ENCODE measurements at regions of chr5 and their contacts with region 1.

Region 1: DNA sequence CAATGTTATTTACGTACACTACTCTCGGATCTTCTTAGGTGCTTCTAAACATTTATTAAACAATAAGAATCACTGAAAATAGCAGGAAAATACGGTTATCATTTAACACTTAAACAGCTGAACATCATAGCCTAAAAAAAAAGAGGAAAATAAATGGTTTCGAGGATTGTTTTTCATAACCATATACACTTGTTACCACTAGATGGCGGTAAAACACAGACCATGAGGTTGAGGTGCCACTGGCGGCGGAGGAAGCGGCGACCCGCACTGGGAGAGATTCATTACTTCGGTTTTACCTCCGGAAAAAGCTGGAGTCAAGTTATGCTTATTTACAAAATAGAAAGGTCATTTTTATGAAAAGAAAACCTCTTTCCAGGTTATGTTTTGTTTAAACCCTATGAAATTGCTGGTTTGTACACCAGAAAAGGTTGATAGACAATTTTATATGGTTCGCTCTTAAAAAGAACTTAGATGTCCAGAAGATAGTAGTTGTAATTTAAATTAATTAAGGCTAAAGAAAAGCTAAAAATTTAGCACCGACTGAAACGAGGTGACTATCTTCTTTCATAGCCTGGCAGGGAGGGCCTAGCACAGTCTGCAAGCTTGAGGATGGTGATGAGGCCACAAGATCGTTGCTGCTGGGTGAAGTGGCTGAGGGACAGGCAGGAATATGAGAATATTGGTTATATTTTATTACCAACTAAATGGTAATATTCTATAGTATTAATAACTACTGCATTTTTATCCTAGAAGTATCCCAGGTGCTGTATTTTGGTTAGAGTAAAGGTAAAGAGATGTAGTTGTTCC is 605.7 kb downstream of the RAB3C start:
- DNase-seq: peak; percentile 78
- ATAC-seq: peak; percentile 75
- H3K4me3 Mint-ChIP-seq: no peak overlapping the region
- H3K27ac Mint-ChIP-seq: no peak overlapping the region
- H3K4me1 Mint-ChIP-seq: peaks cover 5% of the 10 kb centered on the region
- H3K27me3 Mint-ChIP-seq: peaks cover 14% of the 10 kb centered on the region

Region 2: DNA sequence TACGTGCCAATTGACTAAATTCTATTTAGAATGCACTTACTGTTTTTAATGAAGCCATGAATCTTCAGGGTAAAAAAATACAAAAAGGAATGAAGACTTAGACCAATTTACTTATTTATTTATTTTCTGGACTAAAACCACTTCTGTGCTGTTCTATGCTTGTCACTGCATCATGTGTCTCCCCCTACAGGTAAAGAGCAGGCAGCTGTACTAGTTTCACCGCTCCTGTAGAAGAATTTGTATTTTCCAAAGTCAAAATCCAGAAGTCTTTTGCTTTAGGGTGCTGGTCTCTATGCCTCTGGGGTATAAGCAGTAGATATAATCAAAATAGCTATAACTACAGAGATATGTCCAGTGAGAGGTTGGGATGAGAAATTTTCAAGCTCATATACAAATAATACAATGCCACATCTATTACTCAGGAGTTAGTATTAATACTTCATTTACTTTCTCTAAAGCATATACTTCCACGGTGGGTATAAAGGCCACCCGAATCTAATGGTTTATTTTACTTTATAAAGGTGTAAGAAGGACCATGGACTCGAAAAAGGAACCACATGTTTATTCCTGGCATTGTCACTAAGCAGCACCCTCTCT is 14.3 kb before region 1 on chr5:
- CTCF ChIA-PET with region 1: interaction called, 47 read pairs
- POLR2A ChIA-PET with region 1: no interaction called
- intact Hi-C with region 1: no loop called
- DNase-seq: peak; percentile 47
- ATAC-seq: peak; percentile 72
- H3K4me3 Mint-ChIP-seq: no peak overlapping the region
- H3K27ac Mint-ChIP-seq: no peak overlapping the region
- H3K4me1 Mint-ChIP-seq: peaks cover 16% of the 10 kb centered on the region
- H3K27me3 Mint-ChIP-seq: no peaks in the 10 kb centered on the region

Region 3: GRCh38 chr5:59218424-59219045 is 29.9 kb after region 1 on chr5:
- CTCF ChIA-PET with region 1: interaction called, 23 read pairs
- POLR2A ChIA-PET with region 1: no interaction called
- intact Hi-C with region 1: no loop called
- DNase-seq: no peak
- ATAC-seq: no peak
- H3K4me3 Mint-ChIP-seq: no peak overlapping the region
- H3K27ac Mint-ChIP-seq: no peak overlapping the region
- H3K4me1 Mint-ChIP-seq: peaks cover 2% of the 10 kb centered on the region
- H3K27me3 Mint-ChIP-seq: peaks cover 20% of the 10 kb centered on the region

Region 4: GRCh38 chr5:59335544-59335943 is 146.9 kb after region 1 on chr5:
- CTCF ChIA-PET with region 1: no interaction called
- POLR2A ChIA-PET with region 1: no interaction called
- intact Hi-C with region 1: no loop called
- DNase-seq: no peak
- ATAC-seq: no peak
- H3K4me3 Mint-ChIP-seq: no peak overlapping the region
- H3K27ac Mint-ChIP-seq: no peak overlapping the region
- H3K4me1 Mint-ChIP-seq: no peaks in the 10 kb centered on the region
- H3K27me3 Mint-ChIP-seq: peaks cover 17% of the 10 kb centered on the region

Region 5: GRCh38 chr5:59358005-59358861 is 169.6 kb after region 1 on chr5:
- CTCF ChIA-PET with region 1: interaction called, 17 read pairs
- POLR2A ChIA-PET with region 1: no interaction called
- intact Hi-C with region 1: no loop called
- DNase-seq: no peak
- ATAC-seq: no peak
- H3K4me3 Mint-ChIP-seq: no peak overlapping the region
- H3K27ac Mint-ChIP-seq: no peak overlapping the region
- H3K4me1 Mint-ChIP-seq: no peaks in the 10 kb centered on the region
- H3K27me3 Mint-ChIP-seq: peaks cover 16% of the 10 kb centered on the region

Region 6: DNA sequence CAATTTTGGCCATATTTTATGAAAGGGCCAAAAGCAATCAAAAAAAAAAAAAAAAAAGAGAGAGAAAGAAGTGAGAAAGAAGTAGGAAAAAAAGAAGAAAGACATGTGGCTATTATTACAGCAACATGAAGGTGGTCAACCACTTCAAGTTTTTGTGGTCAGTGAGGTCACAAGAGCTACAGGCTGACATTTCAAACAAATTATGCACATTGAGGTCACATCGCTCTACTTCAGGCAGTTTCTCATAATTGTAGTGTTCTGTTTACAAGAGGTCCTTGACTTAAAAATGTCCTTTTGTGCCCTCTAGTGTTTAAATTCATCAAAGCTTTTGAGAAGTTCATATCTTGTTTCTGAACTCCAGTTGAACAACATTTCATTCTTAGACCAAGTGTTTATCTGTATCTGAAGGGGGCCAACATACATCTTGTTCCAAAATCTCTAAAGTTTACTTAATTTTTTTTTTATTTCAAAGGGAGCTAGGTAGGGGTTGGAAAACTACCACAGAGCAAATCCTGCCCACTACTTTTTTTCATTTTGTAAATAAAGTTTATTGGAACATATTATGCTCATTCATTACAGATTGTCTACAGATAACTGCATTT is 191.8 kb after region 1 on chr5:
- CTCF ChIA-PET with region 1: interaction called, 132 read pairs
- POLR2A ChIA-PET with region 1: no interaction called
- intact Hi-C with region 1: loop called (anchors 1 kb)
- DNase-seq: peak; percentile 26
- ATAC-seq: peak; percentile 87
- H3K4me3 Mint-ChIP-seq: no peak overlapping the region
- H3K27ac Mint-ChIP-seq: no peak overlapping the region
- H3K4me1 Mint-ChIP-seq: no peaks in the 10 kb centered on the region
- H3K27me3 Mint-ChIP-seq: no peaks in the 10 kb centered on the region

Region 7: GRCh38 chr5:59496524-59497134 is 308.0 kb after region 1 on chr5:
- CTCF ChIA-PET with region 1: interaction called, 4 read pairs
- POLR2A ChIA-PET with region 1: no interaction called
- intact Hi-C with region 1: loop called in 1 of 2 experiments (anchors 5 kb)
- DNase-seq: peak; percentile 33
- ATAC-seq: peak; percentile 64
- H3K4me3 Mint-ChIP-seq: no peak overlapping the region
- H3K27ac Mint-ChIP-seq: no peak overlapping the region
- H3K4me1 Mint-ChIP-seq: no peaks in the 10 kb centered on the region
- H3K27me3 Mint-ChIP-seq: peaks cover 10% of the 10 kb centered on the region

Region 8: GRCh38 chr5:59799668-59800346 is 611.2 kb after region 1 on chr5:
- CTCF ChIA-PET with region 1: interaction called, 6 read pairs
- POLR2A ChIA-PET with region 1: no interaction called
- intact Hi-C with region 1: loop called (anchors 2 to 5 kb)
- DNase-seq: peak; percentile 23
- ATAC-seq: peak; percentile 74
- H3K4me3 Mint-ChIP-seq: no peak overlapping the region
- H3K27ac Mint-ChIP-seq: no peak overlapping the region
- H3K4me1 Mint-ChIP-seq: no peaks in the 10 kb centered on the region
- H3K27me3 Mint-ChIP-seq: no peaks in the 10 kb centered on the region

Measured in activated CD4-positive, alpha-beta T cell treated with anti-CD3 and anti-CD28 coated beads for 36 hours (primary cell).